ENCODE measurements at regions of chr1 and their contacts with region 1.

Region 1: GRCh38 chr1:53945433-53946251 is at the start of gene IFT25:
- DNase-seq: peak; percentile 95 to 97 (median 96)
- H3K4me3 ChIP-seq: peak within 1 kb of the TSS; percentile 78 to 94 (median 82)
- H3K27ac ChIP-seq: peak within 1 kb of the TSS; percentile 75 to 91
- H3K4me1 ChIP-seq: peaks cover 1 to 27% (median 20%) of the 10 kb centered on the region in 4 experiments
- H3K27me3 ChIP-seq: no peaks in the 10 kb centered on the region

Region 2: DNA sequence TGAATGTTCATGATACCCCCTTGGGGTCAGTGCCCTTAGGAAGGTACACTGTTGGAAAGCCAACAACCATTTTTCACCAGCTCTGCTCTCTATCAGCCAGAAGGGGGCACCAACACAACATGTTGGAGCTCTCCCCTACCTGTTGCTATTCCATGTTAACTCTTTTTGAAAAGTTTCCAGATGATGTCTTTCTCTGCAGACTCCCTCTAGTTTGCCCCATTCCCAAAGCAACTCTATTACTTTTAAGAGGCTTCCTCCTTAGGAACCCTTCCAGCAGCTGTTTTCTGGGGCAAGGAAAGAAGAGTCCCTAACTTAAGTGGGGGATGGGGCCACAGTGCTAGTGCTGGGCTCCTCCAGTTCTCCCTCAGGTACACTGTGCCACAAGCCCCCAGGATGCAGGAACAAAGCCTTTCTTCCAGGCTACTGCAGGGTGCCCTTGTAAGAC is 84.7 kb before region 1 on chr1:
- CTCF ChIA-PET with region 1: interaction called, 147 read pairs
- POLR2A ChIA-PET with region 1: interaction called, 4 read pairs
- DNase-seq: peak; percentile 63 to 78 (median 72)
- H3K4me3 ChIP-seq: no peak overlapping the region
- H3K27ac ChIP-seq: no peak overlapping the region
- H3K4me1 ChIP-seq: peaks cover 0 to 7% (median 3%) of the 10 kb centered on the region in 4 experiments
- H3K27me3 ChIP-seq: no peaks in the 10 kb centered on the region

Region 3: DNA sequence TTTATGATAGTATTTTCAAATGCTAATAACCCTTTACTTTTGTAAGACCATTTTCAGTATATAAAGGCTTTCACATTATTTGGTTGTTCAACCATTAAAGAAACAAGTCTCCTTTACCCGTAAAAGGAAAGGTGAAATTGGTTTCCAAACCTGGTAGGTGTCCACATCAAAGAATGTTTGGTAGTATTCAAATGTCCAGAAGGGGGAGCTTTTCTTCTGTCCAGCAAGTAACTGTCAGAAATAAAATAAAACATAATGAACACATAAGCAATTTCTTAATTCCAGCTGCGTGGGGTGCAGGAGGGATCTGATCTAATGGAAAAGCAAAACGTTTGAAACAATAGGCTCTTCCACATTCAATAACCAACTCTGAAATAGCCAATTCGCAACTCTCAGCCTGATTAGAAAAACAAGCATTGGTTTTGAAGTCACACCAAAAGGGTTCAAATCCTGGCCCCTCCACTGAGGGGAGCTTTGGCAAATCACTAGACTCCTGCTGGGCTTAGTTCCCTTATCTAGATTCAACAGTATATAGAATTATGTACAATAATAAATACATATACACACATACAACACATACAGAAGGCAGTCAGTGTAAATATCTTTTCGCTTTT is 67.0 kb before region 1 on chr1:
- CTCF ChIA-PET with region 1: interaction called, 116 read pairs
- POLR2A ChIA-PET with region 1: no interaction called
- DNase-seq: peak; percentile 59 to 78 (median 77)
- H3K4me3 ChIP-seq: no peak overlapping the region
- H3K27ac ChIP-seq: no peak overlapping the region
- H3K4me1 ChIP-seq: no peaks in the 10 kb centered on the region
- H3K27me3 ChIP-seq: no peaks in the 10 kb centered on the region

Region 4: DNA sequence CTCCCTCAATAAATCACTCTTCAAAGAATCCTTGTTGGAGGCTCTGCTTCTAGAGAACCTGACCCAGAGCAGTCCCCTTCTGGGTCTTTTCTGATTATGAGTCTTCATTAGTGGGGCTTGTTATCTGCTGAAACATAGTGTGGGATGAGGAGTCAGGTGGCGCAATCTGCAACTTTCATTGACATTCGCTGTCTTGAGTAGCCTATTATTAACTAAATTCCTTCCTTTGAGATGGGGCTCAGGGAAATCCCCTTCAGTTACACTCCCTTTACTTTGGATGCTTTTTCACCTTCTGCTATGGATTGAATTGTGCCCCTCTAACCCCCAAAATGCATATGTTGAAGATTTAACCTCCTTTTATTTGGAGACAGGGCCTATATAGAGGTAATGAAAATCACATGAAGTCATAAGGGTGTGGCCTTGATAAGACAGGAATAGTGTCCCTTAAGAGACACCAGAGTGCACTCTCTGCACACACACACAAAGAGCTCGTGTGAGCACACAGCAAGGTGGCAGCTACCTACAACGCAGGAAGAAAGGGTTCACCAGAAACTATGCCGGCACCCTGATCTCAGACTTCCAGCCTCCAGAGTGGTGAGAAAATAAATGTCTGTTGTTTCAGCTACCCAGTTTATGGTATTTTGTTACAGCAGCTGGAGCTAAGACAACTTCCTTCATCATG is 32.1 kb before region 1 on chr1:
- CTCF ChIA-PET with region 1: interaction called, 11 read pairs
- POLR2A ChIA-PET with region 1: no interaction called
- DNase-seq: no peak
- H3K4me3 ChIP-seq: no peak overlapping the region
- H3K27ac ChIP-seq: no peak overlapping the region
- H3K4me1 ChIP-seq: no peaks in the 10 kb centered on the region
- H3K27me3 ChIP-seq: no peaks in the 10 kb centered on the region

Region 5: DNA sequence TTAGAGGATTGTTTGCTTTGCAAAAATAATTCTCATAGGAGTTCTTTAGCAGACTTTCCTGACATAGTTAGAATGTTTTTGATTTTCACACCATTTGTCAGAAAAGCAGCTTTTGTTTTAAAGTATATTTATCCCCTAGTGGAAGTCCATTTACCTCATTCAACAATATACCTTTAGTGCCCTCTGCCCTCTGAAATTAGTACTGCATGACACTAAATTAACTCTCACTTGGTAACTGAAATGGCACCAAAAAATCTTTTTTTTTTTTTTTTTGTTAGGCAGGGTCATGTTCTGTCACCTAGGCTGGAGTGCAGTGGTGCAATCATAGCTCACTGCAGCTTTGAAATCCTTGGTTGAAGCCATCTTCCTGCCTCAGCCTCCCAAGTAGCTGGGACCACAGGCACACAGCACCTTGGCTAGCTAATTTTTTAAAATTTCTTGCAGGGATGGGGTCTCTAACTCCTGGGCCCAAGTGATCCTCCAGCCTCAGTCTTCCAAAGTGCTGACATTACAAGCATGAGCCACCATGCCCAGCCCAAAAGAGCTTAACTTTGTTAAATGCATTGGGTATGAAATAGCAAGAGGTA is 14.1 kb after region 1 on chr1:
- CTCF ChIA-PET with region 1: interaction called, 39 read pairs
- POLR2A ChIA-PET with region 1: no interaction called
- DNase-seq: peak; percentile 62 to 85 (median 76)
- H3K4me3 ChIP-seq: no peak overlapping the region
- H3K27ac ChIP-seq: no peak overlapping the region
- H3K4me1 ChIP-seq: peaks cover 0 to 8% (median 2%) of the 10 kb centered on the region in 4 experiments
- H3K27me3 ChIP-seq: no peaks in the 10 kb centered on the region

Measured in common myeloid progenitor, CD34-positive (primary cell).